A673 (cell line): ENCODE measurements at regions of chr4 and their contacts with region 1.

Region 1: GRCh38 chr4:153083447-153083947 is 120.7 kb upstream of the TRIM2 start:
- DNase-seq: peak; percentile 88
- H3K4me3 ChIP-seq: no peak overlapping the region
- H3K27ac ChIP-seq: no peak overlapping the region
- H3K4me1 ChIP-seq: peaks cover 23% of the 10 kb centered on the region
- H3K27me3 ChIP-seq: no peaks in the 10 kb centered on the region
- CTCF ChIP-seq: peak; percentile 71

Region 2: GRCh38 chr4:152831416-152831815 is 252.1 kb before region 1 on chr4:
- CTCF ChIA-PET with region 1: no interaction called
- POLR2A ChIA-PET with region 1: no interaction called
- intact Hi-C with region 1: no loop called
- DNase-seq: no peak
- H3K4me3 ChIP-seq: no peak overlapping the region
- H3K27ac ChIP-seq: no peak overlapping the region
- H3K4me1 ChIP-seq: no peaks in the 10 kb centered on the region
- H3K27me3 ChIP-seq: no peaks in the 10 kb centered on the region
- CTCF ChIP-seq: no peak

Region 3: DNA sequence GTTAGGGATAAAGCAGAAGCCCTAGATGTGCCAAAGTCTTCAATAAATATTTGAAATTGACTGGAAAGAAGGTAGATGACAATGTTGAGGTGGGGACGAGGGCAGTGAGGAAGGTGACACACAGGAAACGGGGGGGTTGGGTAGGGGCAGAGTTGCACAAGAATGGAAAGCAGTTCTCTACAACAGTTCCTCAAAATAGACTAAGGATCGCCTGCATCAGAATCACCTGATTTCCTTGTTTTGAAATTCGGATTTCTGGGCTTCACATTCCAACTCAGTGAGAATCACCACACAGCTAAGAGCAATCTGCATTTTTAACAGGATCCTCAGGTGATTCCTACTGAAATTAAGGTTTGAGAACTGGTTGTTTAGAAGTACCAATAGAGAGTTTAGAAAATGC is 233.1 kb before region 1 on chr4:
- CTCF ChIA-PET with region 1: interaction called, 7 read pairs
- POLR2A ChIA-PET with region 1: no interaction called
- intact Hi-C with region 1: loop called (anchors 1 kb)
- DNase-seq: no peak
- H3K4me3 ChIP-seq: no peak overlapping the region
- H3K27ac ChIP-seq: no peak overlapping the region
- H3K4me1 ChIP-seq: no peaks in the 10 kb centered on the region
- H3K27me3 ChIP-seq: no peaks in the 10 kb centered on the region
- CTCF ChIP-seq: no peak

Region 4: GRCh38 chr4:152937336-152938236 is 145.9 kb before region 1 on chr4:
- CTCF ChIA-PET with region 1: no interaction called
- POLR2A ChIA-PET with region 1: interaction called, 5 read pairs
- intact Hi-C with region 1: loop called (anchors 5 kb)
- DNase-seq: peak; percentile 34
- H3K4me3 ChIP-seq: peak overlapping the region; percentile 61
- H3K27ac ChIP-seq: no peak overlapping the region
- H3K4me1 ChIP-seq: no peaks in the 10 kb centered on the region
- H3K27me3 ChIP-seq: peaks cover 67% of the 10 kb centered on the region
- CTCF ChIP-seq: no peak

Region 5: DNA sequence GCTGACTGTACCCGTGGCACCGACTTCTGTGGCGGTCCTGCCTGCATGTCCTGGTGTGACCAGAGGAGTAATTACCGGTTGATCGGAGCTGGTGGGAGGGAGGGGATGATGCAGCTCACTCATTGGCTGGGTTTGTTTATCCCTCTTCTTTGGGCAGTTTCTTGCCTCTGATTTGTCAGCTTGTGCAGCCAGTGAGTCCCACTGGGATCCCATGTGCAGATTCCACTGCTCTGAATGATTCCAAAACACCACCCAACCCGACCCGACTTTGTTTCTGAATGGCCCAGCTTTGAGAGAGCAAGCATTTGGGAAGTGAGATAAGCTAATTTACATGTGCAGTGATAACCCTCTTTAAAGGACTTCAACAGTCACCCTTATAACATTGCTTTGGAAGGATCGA is 133.6 kb before region 1 on chr4:
- CTCF ChIA-PET with region 1: no interaction called
- POLR2A ChIA-PET with region 1: no interaction called
- intact Hi-C with region 1: no loop called
- DNase-seq: no peak
- H3K4me3 ChIP-seq: no peak overlapping the region
- H3K27ac ChIP-seq: no peak overlapping the region
- H3K4me1 ChIP-seq: no peaks in the 10 kb centered on the region
- H3K27me3 ChIP-seq: peaks cover 7% of the 10 kb centered on the region
- CTCF ChIP-seq: no peak

Region 6: DNA sequence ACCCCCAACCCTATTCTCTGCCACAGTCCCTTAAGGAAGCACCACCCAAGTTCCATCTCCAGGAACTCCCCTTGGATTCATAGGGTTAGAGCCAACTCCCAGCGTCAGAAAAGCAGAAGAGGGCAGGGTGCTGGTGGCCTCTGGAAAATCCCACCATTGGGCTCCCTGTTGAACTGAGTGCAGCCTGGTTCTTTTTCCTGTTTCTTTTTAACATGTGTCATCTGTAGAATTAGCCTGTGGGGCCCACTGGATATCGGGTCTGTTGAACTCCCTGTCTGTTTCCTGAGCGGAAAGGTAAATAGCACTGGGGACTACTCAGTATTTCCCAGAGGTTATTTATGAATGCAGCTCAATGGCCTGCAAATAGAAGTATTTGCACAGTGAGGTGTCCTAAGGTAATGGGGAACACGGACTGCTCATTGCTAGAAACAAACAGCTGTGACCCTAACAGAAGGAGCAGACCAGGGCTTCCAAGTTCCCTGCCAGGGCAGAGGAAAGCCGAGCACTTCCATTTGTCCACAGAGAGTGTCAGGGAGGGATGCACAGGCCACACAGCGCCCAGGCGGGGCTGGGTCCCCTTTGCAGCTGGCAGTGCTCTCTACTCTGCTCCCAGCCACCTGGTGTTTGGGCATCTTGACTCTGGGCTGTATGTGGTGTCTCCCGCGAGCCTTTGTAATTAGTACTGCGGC is 44.7 kb before region 1 on chr4:
- CTCF ChIA-PET with region 1: no interaction called
- POLR2A ChIA-PET with region 1: interaction called, 13 read pairs
- intact Hi-C with region 1: no loop called
- DNase-seq: no peak
- H3K4me3 ChIP-seq: no peak overlapping the region
- H3K27ac ChIP-seq: no peak overlapping the region
- H3K4me1 ChIP-seq: peaks cover 9% of the 10 kb centered on the region
- H3K27me3 ChIP-seq: peaks cover 6% of the 10 kb centered on the region
- CTCF ChIP-seq: no peak

Region 7: GRCh38 chr4:153432968-153433753 is 349.7 kb after region 1 on chr4:
- CTCF ChIA-PET with region 1: no interaction called
- POLR2A ChIA-PET with region 1: no interaction called
- intact Hi-C with region 1: no loop called
- DNase-seq: peak; percentile 81
- H3K4me3 ChIP-seq: no peak overlapping the region
- H3K27ac ChIP-seq: no peak overlapping the region
- H3K4me1 ChIP-seq: peaks cover 4% of the 10 kb centered on the region
- H3K27me3 ChIP-seq: no peaks in the 10 kb centered on the region
- CTCF ChIP-seq: peak; percentile 76

Region 8: GRCh38 chr4:153987291-153987690 is 903.8 kb after region 1 on chr4:
- CTCF ChIA-PET with region 1: no interaction called
- POLR2A ChIA-PET with region 1: no interaction called
- intact Hi-C with region 1: no loop called
- DNase-seq: no peak
- H3K4me3 ChIP-seq: no peak overlapping the region
- H3K27ac ChIP-seq: no peak overlapping the region
- H3K4me1 ChIP-seq: no peaks in the 10 kb centered on the region
- H3K27me3 ChIP-seq: no peaks in the 10 kb centered on the region
- CTCF ChIP-seq: no peak